ENCODE measurements at regions of chr12 and their contacts with region 1.

Region 1: GRCh38 chr12:29376118-29376517 is 4.9 kb downstream of the ERGIC2 start:
- DNase-seq: no peak
- ATAC-seq: no peak
- H3K4me3 ChIP-seq: no peak overlapping the region
- H3K27ac ChIP-seq: no peak overlapping the region
- H3K4me1 ChIP-seq: peaks cover 16% of the 10 kb centered on the region
- H3K27me3 ChIP-seq: no peaks in the 10 kb centered on the region; a peak in 1 of 5 replicates
- CTCF ChIP-seq: no peak
- EP300 ChIP-seq: no peak
- POLR2A ChIP-seq: no peak
- RAD21 ChIP-seq: no peak

Region 2: DNA sequence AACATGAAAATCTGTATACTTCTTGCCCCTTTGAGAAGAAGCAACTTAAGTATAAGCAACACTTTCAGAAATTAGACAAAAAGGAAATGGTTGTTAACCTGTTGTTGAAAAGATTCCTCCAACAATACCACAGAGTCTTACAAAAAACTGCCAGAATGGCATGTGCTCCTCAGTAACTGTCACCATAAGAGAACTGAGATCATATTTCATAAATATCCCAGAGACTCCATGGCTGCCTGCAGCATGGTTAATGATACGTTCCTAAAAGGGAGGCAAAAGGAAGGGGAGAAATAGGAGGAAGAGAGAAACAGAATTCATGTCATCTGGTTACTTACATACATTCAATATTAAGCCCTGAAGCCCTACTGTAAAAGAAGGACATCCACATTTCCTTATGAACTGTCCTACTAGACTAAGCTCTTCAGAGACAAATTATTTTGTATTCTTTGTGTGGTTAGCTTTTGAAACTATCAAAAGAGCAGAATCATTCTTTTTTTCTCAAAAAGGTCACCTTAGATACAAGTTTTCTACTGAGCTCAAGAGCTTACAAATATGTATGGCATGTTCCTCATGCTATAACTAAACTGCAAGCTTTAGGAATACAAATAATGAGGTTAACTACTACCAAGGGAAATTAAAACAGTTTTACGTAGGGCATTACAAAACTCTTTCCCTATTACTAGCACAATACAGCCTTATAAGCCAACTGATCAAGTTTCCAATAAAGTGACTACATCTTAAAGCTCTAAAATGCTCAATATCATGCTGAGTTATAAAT is 32.9 kb before region 1 on chr12:
- CTCF ChIA-PET with region 1: no interaction called
- POLR2A ChIA-PET with region 1: no interaction called
- in situ Hi-C with region 1: no loop called
- intact Hi-C with region 1: no loop called
- DNase-seq: no peak
- ATAC-seq: no peak
- H3K4me3 ChIP-seq: no peak overlapping the region
- H3K27ac ChIP-seq: no peak overlapping the region
- H3K4me1 ChIP-seq: no peaks in the 10 kb centered on the region
- H3K27me3 ChIP-seq: no peaks in the 10 kb centered on the region
- CTCF ChIP-seq: no peak
- EP300 ChIP-seq: no peak
- POLR2A ChIP-seq: no peak
- RAD21 ChIP-seq: no peak

Region 3: DNA sequence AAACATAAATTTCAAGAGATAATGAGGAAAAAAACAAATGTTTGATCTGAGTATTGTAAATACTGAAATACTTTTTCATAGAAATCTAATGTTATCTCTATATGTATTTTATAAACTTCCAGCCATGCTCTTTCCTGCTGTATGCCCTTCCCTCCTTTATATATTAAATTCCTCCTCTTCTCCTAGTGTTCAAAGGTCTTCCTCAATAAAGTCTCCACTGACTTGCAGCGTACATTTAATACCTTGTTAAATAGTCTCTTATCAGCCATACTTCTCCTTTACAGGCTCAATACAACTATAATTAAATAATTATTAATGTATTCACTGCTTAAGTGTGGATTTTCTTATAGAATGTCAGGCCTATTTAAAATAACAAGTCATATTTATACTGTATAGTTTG is 21.2 kb before region 1 on chr12:
- CTCF ChIA-PET with region 1: no interaction called
- POLR2A ChIA-PET with region 1: interaction called, 5 read pairs
- in situ Hi-C with region 1: no loop called
- intact Hi-C with region 1: loop called (anchors 2 kb)
- DNase-seq: no peak
- ATAC-seq: no peak
- H3K4me3 ChIP-seq: no peak overlapping the region
- H3K27ac ChIP-seq: no peak overlapping the region
- H3K4me1 ChIP-seq: no peaks in the 10 kb centered on the region
- H3K27me3 ChIP-seq: no peaks in the 10 kb centered on the region
- CTCF ChIP-seq: no peak
- EP300 ChIP-seq: no peak
- POLR2A ChIP-seq: no peak
- RAD21 ChIP-seq: no peak